CD4-positive, alpha-beta memory T cell (primary cell): ENCODE measurements at regions of chr9 and their contacts with region 1.

Region 1: DNA sequence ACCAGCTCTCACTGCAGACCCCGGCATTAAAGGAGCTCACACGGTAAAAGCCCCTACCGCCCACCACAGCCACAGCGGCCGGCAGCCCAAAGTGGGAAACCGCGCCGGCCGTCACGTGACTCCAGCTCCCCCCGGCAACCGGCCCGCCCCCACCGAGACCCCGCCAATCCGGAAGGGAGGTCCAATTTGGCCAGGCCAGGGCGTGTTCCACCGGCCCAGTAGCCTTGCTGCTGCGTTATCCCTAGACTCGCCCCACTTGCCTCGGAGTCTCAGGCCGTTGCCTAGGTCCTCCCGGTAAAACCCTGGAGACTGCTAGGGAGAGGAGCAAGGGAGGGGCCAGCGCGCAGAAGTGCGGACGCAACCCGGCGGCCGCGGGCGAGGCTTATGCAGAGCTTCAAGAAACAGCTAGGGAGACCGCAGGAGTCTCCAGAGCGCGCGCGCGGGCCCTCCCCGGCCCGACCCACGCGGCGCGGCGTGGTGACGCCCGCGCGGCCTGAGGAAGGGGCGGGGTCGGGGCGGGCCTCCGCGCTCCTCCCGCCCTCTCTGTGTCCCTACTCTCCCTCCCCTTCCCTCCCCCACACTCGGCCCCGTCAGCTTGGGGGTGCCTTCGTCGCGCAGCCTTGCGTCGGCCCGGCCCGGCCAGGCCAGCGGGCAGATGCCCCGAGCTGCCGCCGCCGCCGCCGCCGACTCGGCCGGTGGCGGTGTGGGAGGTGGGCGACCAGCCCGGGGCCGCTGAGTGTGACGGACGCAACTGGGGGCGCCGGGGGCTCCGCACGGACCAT is at the start of gene RIC1:
- DNase-seq: peak; percentile 89 to 90 (median 90)
- H3K4me3 ChIP-seq: peak within 1 kb of the TSS; percentile 82 to 86
- H3K4me3 Mint-ChIP-seq: peak within 1 kb of the TSS; percentile 97 to 99 (median 98)
- H3K27ac ChIP-seq: peak within 1 kb of the TSS; percentile 89
- H3K27ac Mint-ChIP-seq: peak within 1 kb of the TSS; percentile 92 to 99 (median 97)
- H3K4me1 ChIP-seq: peaks cover 76% of the 10 kb centered on the region
- H3K4me1 Mint-ChIP-seq: peaks cover 44 to 65% (median 53%) of the 10 kb centered on the region in 4 donors
- H3K27me3 ChIP-seq: no peaks in the 10 kb centered on the region
- H3K27me3 Mint-ChIP-seq: no peaks in the 10 kb centered on the region
- total RNA-seq, gene RIC1: 26.3 to 27.1 TPM

Region 2: DNA sequence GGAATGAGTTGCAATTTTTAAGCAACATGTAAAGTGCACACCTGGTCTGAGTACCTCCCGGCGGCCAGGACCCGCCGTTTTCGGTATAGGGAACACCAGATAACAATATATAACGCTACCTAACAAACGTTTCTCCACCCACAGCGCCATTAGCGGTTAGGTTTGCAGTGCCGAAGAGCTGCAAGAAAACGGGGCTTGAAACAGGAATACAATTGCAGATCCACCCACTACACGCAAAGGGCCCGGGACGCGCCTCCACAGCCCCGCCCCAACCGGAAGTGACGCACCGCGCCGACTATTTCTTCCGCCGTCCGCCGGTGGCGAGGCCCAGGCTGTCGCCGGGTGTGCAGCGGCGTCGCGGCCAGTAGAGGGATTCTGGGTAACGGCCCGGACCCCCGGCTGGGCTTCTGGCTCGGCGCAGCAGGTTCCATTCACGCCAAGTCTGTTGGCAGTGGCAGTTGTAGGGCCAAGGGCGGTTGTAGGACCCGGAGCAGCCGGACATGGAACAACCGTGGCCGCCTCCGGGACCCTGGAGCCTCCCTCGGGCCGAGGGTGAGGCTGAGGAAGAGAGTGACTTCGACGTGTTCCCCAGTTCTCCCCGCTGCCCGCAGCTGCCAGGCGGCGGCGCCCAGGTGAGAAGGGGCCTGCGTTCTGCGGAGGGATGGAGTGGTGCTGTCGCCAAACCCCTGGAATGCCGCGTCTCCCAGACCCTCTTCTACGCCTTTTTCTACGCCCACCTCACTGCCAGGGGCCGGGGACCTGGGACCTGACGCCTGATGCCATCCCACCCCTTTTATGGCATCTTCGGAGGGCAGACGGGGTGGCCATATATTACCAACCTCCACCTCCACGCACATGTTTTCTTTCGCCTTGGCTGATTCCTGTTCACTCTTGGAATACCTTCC is 949.2 kb before region 1 on chr9 and contains the start of gene CDC37L1:
- CTCF ChIA-PET with region 1: no interaction called
- POLR2A ChIA-PET with region 1: interaction called, 5 read pairs
- intact Hi-C with region 1: loop called (anchors 2 kb)
- DNase-seq: peak; percentile 97 to 99 (median 99)
- H3K4me3 ChIP-seq: peak within 1 kb of the TSS; percentile 72 to 80
- H3K4me3 Mint-ChIP-seq: no peak within 1 kb of the TSS
- H3K27ac ChIP-seq: peak within 1 kb of the TSS; percentile 94
- H3K27ac Mint-ChIP-seq: no peak within 1 kb of the TSS
- H3K4me1 ChIP-seq: peaks cover 36% of the 10 kb centered on the region
- H3K4me1 Mint-ChIP-seq: peaks cover 11 to 16% (median 11%) of the 10 kb centered on the region in 4 donors
- H3K27me3 ChIP-seq: no peaks in the 10 kb centered on the region
- H3K27me3 Mint-ChIP-seq: no peaks in the 10 kb centered on the region
- total RNA-seq, gene CDC37L1: 27.2 to 27.8 TPM

Region 3: DNA sequence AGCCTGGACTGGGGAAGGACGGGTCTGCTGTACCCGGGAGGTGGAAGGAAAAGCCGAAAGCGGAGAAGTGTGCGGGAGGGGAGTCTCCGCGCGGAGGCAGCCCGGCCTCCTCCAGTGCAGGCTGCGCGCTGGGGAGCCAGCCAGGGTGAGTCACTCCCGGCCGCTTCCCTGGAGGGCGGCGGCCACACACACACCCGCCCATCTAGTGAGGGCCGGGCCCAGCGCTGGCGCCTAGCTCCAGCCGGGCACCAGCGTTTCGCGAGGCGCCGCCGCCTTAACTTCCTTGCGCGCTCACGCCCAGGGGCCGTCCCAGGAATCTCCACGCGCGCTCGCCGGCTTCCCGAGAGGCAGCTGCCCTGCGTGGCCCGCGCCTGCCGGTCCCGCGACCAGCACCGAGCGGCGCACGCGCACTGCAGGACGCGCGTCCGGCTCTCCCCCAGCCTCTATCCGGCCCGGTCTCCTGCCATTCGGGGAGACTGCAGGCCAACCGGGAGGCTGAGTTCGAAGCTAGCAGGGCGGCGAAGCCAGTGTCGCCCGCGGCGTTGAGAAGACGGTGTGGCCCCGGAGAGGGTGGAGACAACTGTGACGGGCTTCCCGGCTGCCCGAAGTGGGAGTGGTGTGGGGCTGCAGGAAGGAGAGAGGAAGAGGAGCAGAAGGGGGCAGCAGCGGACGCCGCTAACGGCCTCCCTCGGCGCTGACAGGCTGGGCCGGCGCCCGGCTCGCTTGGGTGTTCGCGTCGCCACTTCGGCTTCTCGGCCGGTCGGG is 643.9 kb before region 1 on chr9 and contains the start of gene JAK2:
- CTCF ChIA-PET with region 1: no interaction called
- POLR2A ChIA-PET with region 1: interaction called, 6 read pairs
- intact Hi-C with region 1: loop called (anchors 2 kb)
- DNase-seq: peak; percentile 82 to 87 (median 83)
- H3K4me3 ChIP-seq: peak within 1 kb of the TSS; percentile 53
- H3K4me3 Mint-ChIP-seq: peak within 1 kb of the TSS; percentile 90 to 97 (median 96)
- H3K27ac ChIP-seq: peak within 1 kb of the TSS; percentile 73
- H3K27ac Mint-ChIP-seq: peak within 1 kb of the TSS; percentile 83 to 97 (median 94)
- H3K4me1 ChIP-seq: peaks cover 45% of the 10 kb centered on the region
- H3K4me1 Mint-ChIP-seq: peaks cover 15 to 30% (median 24%) of the 10 kb centered on the region in 4 donors
- H3K27me3 ChIP-seq: no peaks in the 10 kb centered on the region
- H3K27me3 Mint-ChIP-seq: no peaks in the 10 kb centered on the region
- total RNA-seq, gene JAK2: 17.0 to 19.9 TPM

Region 4: DNA sequence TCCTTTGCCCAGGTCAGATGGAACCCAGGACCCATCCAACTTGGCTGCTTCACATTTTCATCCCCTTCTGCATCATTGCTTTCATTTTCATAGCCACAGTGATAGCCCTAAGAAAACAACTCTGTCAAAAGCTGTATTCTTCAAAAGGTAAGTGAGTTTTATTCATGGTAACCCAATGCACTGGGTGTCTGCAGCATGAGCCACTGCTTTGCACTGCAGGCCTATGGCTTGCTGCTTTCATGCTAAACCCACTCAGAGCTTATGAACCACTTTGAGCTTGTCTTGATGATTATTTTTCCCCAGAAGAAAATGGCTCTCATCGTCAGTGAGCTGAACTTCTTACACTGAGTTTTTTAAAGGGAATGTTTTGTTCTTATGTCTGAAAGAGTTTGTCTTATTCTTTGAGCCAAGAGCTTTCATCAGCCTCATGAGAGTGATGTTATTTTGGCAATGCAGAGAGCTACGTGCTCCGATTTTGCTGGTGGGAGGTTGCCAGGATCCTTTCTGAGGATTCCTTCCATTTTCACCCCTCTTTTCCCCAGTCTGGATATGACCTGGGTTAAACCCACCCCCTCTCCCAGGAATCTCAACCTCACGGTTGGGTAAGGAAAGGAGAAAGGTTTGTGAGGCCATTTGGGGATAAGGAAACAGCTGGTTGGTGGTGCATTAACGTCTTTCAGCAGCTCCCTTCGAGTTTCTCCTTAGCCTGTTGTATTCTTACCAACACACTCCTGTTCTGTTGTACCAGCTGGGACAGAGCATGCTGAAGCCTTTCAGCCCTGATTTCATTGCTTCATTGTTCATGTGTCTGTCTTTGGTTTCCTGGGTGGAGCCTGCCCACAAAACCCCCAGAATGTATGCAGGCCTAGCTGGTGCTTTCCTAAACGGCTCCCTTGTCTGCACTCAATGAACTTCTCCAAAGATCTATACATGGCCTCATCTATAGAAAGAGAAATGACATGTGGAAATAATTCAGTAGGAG is 70.8 kb before region 1 on chr9:
- CTCF ChIA-PET with region 1: no interaction called
- POLR2A ChIA-PET with region 1: interaction called, 14 read pairs
- intact Hi-C with region 1: no loop called
- DNase-seq: peak; percentile 61 to 79 (median 68)
- H3K4me3 ChIP-seq: peak overlapping the region in 1 of 2 donors; percentile 14
- H3K4me3 Mint-ChIP-seq: peak overlapping the region in 7 of 8 donors; percentile 26 to 85 (median 68)
- H3K27ac ChIP-seq: peak overlapping the region; percentile 56
- H3K27ac Mint-ChIP-seq: peak overlapping the region; percentile 85 to 99 (median 95)
- H3K4me1 ChIP-seq: peaks cover 42% of the 10 kb centered on the region
- H3K4me1 Mint-ChIP-seq: peaks cover 36 to 70% (median 59%) of the 10 kb centered on the region in 4 donors
- H3K27me3 ChIP-seq: no peaks in the 10 kb centered on the region
- H3K27me3 Mint-ChIP-seq: no peaks in the 10 kb centered on the region

Region 5: DNA sequence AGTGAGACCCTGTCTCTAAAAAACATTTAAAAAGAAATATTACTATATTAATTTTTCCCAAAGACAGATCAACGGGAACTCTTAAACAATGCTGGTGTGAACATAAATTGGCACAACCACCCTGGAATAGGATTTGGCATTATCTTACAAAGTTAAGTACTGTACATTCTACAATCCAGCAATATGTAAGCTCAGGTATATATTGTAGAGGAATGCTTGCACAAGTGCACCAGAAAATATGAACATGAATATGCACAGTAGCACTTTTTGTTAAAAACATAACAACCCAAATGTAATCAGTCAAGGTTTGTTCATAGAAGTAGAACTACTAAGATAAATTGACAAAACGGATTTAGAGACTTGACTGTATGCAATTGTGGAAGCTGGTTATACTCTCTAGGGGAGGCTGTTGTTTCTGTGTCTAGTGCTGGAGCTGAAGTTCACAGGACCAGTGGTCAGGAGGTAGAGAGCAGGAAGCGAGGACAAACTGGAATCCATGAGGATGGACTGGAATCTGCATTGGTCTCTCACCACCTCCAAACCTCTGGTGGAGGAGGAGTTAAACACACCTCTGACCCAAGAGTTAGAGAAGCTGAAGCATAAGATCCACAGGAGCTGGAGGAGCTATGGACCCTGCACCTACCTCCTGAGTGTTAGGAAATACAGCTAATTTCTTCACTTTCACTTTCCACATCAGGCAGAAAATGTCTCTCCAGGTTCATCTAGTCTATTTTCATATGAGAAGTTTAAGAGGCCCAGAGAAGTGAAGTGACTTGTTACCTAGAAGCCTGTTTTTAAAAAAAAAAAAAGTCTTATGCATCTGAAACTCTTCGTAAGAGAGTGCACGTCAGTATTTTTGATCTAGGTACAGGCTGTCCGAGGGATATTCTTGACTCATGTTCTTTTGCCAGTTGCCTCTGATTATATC is 20.2 kb before region 1 on chr9:
- CTCF ChIA-PET with region 1: interaction called, 3 read pairs
- POLR2A ChIA-PET with region 1: interaction called, 13 read pairs
- intact Hi-C with region 1: loop called (anchors 2 kb)
- DNase-seq: no peak
- H3K4me3 ChIP-seq: no peak overlapping the region
- H3K4me3 Mint-ChIP-seq: peak overlapping the region; percentile 58 to 78 (median 70)
- H3K27ac ChIP-seq: no peak overlapping the region
- H3K27ac Mint-ChIP-seq: peak overlapping the region in 5 of 7 donors; percentile 49 to 86 (median 77)
- H3K4me1 ChIP-seq: peaks cover 5% of the 10 kb centered on the region
- H3K4me1 Mint-ChIP-seq: peaks cover 10 to 19% (median 16%) of the 10 kb centered on the region in 4 donors
- H3K27me3 ChIP-seq: no peaks in the 10 kb centered on the region
- H3K27me3 Mint-ChIP-seq: no peaks in the 10 kb centered on the region

Region 6: DNA sequence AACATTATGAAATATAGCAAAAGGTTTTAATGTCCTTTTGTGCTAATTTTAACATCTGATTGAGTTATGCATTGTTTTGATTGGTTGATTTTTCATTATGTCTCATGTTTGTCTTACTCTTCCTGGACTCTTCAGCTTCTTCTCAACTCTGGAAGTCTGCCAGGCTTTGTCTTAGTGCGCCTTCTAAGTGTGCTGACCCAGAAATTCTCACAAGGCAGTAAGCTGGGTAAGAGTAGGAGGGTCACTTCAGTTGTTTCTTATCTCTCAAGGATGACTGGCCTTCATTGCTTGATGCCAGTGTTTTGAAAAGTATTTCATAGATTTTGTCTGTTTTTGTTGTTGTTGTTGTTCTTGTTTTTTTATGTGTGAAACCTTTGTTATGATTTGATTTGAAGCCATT is 59.4 kb after region 1 on chr9:
- CTCF ChIA-PET with region 1: no interaction called
- POLR2A ChIA-PET with region 1: no interaction called
- intact Hi-C with region 1: no loop called
- DNase-seq: no peak
- H3K4me3 ChIP-seq: no peak overlapping the region
- H3K4me3 Mint-ChIP-seq: no peak overlapping the region
- H3K27ac ChIP-seq: no peak overlapping the region
- H3K27ac Mint-ChIP-seq: peak overlapping the region in 2 of 7 donors; percentile 30 to 42
- H3K4me1 ChIP-seq: no peaks in the 10 kb centered on the region
- H3K4me1 Mint-ChIP-seq: peaks cover 3 to 11% (median 7%) of the 10 kb centered on the region in 4 donors
- H3K27me3 ChIP-seq: no peaks in the 10 kb centered on the region
- H3K27me3 Mint-ChIP-seq: no peaks in the 10 kb centered on the region

Region 7: DNA sequence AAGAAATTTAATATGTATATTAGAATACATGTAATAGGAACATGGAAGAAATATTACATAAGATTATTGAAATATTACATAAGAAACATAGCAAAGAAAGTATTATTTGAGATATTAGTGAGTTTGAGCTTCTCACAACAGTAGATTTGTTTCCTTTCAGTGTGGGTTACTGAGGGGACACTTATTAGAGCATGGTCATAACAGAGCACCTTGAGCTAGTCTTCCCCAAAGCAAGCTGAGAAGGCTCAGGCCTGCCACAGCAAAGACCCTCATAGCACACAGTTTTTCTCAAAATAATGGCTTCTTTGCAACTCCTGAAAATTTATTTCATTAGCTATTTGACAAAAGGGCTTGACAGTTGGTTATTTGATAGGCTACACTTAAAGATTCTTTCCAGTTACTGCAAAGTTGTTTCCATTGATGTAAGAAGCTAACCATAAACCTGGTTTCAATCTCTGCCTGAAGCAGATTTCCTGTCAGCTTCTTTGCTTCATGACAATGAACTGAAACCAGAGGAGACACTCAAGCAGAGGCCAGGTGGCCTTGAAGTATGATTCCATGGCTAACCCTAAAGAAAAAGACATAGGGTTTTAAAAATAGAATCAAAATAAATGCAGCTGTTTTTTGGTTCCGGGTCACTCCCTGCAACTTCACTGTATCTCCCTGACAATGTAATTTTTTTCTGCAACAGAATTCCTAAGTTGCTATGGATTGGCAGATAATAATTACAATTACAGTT is 135.6 kb after region 1 on chr9:
- CTCF ChIA-PET with region 1: no interaction called
- POLR2A ChIA-PET with region 1: no interaction called
- intact Hi-C with region 1: no loop called
- DNase-seq: no peak
- H3K4me3 ChIP-seq: no peak overlapping the region
- H3K4me3 Mint-ChIP-seq: no peak overlapping the region
- H3K27ac ChIP-seq: no peak overlapping the region
- H3K27ac Mint-ChIP-seq: peak overlapping the region in 1 of 7 donors; percentile 12
- H3K4me1 ChIP-seq: no peaks in the 10 kb centered on the region
- H3K4me1 Mint-ChIP-seq: peaks cover 4 to 10% (median 6%) of the 10 kb centered on the region in 4 donors
- H3K27me3 ChIP-seq: no peaks in the 10 kb centered on the region
- H3K27me3 Mint-ChIP-seq: no peaks in the 10 kb centered on the region

Region 8: GRCh38 chr9:5832543-5833529 is 204.1 kb after region 1 on chr9 and contains the start of gene ERMP1:
- CTCF ChIA-PET with region 1: interaction called, 4 read pairs
- POLR2A ChIA-PET with region 1: interaction called, 25 read pairs
- intact Hi-C with region 1: loop called (anchors 2 kb)
- DNase-seq: peak; percentile 87 to 93 (median 90)
- H3K4me3 ChIP-seq: peak within 1 kb of the TSS; percentile 72 to 93
- H3K4me3 Mint-ChIP-seq: peak within 1 kb of the TSS; percentile 91 to 98 (median 96)
- H3K27ac ChIP-seq: peak within 1 kb of the TSS; percentile 53
- H3K27ac Mint-ChIP-seq: peak within 1 kb of the TSS; percentile 88 to 97 (median 95)
- H3K4me1 ChIP-seq: peaks cover 42% of the 10 kb centered on the region
- H3K4me1 Mint-ChIP-seq: peaks cover 33 to 58% (median 43%) of the 10 kb centered on the region in 4 donors
- H3K27me3 ChIP-seq: no peaks in the 10 kb centered on the region
- H3K27me3 Mint-ChIP-seq: no peaks in the 10 kb centered on the region
- total RNA-seq, gene ERMP1: 22.8 to 24.5 TPM

Region 9: GRCh38 chr9:6681147-6681956 is 1052.6 kb after region 1 on chr9:
- CTCF ChIA-PET with region 1: no interaction called
- POLR2A ChIA-PET with region 1: no interaction called
- intact Hi-C with region 1: loop called (anchors 2 kb)
- DNase-seq: peak; percentile 92 to 96 (median 94)
- H3K4me3 ChIP-seq: peak overlapping the region; percentile 91 to 99
- H3K4me3 Mint-ChIP-seq: peak overlapping the region; percentile 93 to 97 (median 95)
- H3K27ac ChIP-seq: peak overlapping the region; percentile 82
- H3K27ac Mint-ChIP-seq: peak overlapping the region; percentile 94 to 100 (median 99)
- H3K4me1 ChIP-seq: peaks cover 23% of the 10 kb centered on the region
- H3K4me1 Mint-ChIP-seq: peaks cover 14 to 34% (median 22%) of the 10 kb centered on the region in 4 donors
- H3K27me3 ChIP-seq: no peaks in the 10 kb centered on the region
- H3K27me3 Mint-ChIP-seq: no peaks in the 10 kb centered on the region